HepG2 (cell line): ENCODE measurements at regions of chr9 and their contacts with region 1.

Region 1: GRCh38 chr9:107340920-107341632 is 58.0 kb downstream of the RAD23B start:
- DNase-seq: peak; percentile 70
- ATAC-seq: peak; percentile 67
- H3K4me3 ChIP-seq: no peak overlapping the region
- H3K27ac ChIP-seq: peak overlapping the region; percentile 18
- H3K4me1 ChIP-seq: peaks cover 19% of the 10 kb centered on the region
- H3K27me3 ChIP-seq: no peaks in the 10 kb centered on the region
- CTCF ChIP-seq: peak; percentile 97
- EP300 ChIP-seq: no peak
- POLR2A ChIP-seq: peak in 1 of 2 experiments; percentile 38; a peak in 1 of 4 replicates
- RAD21 ChIP-seq: peak; percentile 78

Region 2: DNA sequence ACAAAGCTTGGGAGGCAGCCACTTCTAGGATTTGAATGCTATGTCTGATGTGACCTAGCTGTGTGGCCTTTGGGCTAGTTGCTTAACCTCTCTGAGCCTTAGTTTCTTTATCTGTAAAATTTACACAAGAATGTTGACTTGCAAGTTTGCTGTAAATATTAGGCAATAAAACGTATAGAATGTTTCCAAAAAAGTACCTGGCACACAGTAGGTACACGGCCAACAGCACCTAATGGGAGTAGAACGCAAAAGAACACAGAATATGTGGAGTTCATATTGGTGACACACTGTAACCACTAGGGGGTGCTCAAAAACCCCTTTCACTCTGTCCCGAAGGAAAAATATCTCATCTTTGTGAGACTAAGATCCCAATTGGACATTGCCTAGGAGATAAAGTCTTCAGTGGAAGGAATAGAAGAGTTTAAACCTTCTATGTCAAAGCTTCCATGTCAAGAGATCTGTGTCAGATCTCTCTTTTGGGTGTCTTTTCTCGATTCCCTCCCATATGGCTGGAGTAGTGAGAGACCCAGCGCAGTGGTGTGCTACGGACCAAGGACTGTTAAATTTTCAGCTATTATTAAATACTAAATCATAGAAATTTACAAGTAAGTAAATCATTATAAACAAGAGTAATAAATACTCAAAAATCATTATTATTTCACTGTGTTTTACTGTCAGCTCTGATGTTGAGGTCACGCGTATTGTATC is 203.4 kb before region 1 on chr9:
- CTCF ChIA-PET with region 1: interaction called, 7 read pairs
- POLR2A ChIA-PET with region 1: no interaction called
- in situ Hi-C with region 1: no loop called
- intact Hi-C with region 1: loop called (anchors 2 kb)
- DNase-seq: peak; percentile 21
- ATAC-seq: peak; percentile 69
- H3K4me3 ChIP-seq: no peak overlapping the region
- H3K27ac ChIP-seq: no peak overlapping the region
- H3K4me1 ChIP-seq: no peaks in the 10 kb centered on the region
- H3K27me3 ChIP-seq: peaks cover 2 to 3% of the 10 kb centered on the region in 2 experiments; a peak in 2 of 5 replicates
- CTCF ChIP-seq: peak; percentile 74
- EP300 ChIP-seq: no peak
- POLR2A ChIP-seq: no peak
- RAD21 ChIP-seq: peak; percentile 48; the same call in 1 of the 2 replicates

Region 3: GRCh38 chr9:107158321-107158720 is 182.8 kb before region 1 on chr9:
- CTCF ChIA-PET with region 1: no interaction called
- POLR2A ChIA-PET with region 1: no interaction called
- in situ Hi-C with region 1: no loop called
- intact Hi-C with region 1: loop called (anchors 1 kb)
- DNase-seq: peak; percentile 35
- ATAC-seq: peak; percentile 97
- H3K4me3 ChIP-seq: no peak overlapping the region
- H3K27ac ChIP-seq: no peak overlapping the region
- H3K4me1 ChIP-seq: peaks cover 11% of the 10 kb centered on the region
- H3K27me3 ChIP-seq: no peaks in the 10 kb centered on the region
- CTCF ChIP-seq: peak; percentile 55
- EP300 ChIP-seq: no peak
- POLR2A ChIP-seq: no peak
- RAD21 ChIP-seq: peak; percentile 18; the same call in 1 of the 2 replicates

Region 4: GRCh38 chr9:107243751-107244150 is 97.3 kb before region 1 on chr9:
- CTCF ChIA-PET with region 1: no interaction called
- POLR2A ChIA-PET with region 1: no interaction called
- in situ Hi-C with region 1: no loop called
- intact Hi-C with region 1: no loop called
- DNase-seq: peak; percentile 89
- ATAC-seq: peak; percentile 74
- H3K4me3 ChIP-seq: no peak overlapping the region
- H3K27ac ChIP-seq: peak overlapping the region; percentile 24
- H3K4me1 ChIP-seq: peaks cover 39% of the 10 kb centered on the region
- H3K27me3 ChIP-seq: no peaks in the 10 kb centered on the region; a peak in 1 of 5 replicates
- CTCF ChIP-seq: no peak
- EP300 ChIP-seq: peak; percentile 23 to 82; a peak in 3 of 4 replicates
- POLR2A ChIP-seq: no peak
- RAD21 ChIP-seq: no peak